ENCODE measurements at regions of chr7 and their contacts with region 1.

Region 1: DNA sequence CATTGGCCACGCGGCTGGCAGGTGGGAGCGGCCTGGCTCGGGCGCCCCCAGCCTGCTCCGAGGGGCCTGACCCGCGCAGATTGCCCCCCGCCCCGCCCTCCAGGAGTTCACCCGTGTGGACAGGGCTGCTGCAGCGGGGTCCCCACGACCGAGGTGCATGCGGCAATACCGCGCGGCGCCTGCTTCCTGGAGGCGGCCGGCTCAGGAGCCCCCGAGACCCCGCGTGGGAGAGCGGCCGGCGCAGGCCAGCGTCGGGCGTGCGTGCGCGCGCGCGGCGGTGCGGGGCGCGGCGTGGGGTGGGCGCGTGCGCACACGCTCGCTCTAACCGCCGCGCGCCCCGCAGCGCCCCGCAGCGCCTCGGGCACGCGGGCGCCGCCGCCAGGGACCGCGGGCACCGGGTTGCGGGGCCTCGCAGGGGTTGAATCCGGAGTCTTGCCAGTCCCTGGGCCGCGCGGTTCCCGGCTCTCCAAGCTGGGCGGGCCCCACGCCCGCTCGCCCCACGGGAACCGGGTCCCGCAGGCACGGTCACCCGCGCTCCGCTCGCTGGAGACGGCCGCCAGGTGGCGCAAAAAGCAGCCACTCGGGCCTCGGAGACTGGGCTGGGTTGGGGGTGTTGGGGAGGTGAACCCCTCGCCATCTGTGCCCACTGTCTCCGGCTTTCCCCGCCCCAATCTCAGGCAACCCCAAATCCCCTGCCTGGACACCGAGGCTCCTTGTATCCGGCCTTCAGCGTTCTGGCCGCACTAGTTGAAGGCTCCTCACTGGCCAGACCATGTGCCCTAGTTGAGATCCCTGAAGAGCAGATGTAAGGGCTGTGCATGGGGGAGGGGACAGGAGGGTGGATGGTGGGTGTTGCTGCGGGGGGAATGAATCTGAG is 1.3 kb upstream of the ACHE start:
- DNase-seq: peak in 1 of 2 donors; percentile 60
- ATAC-seq: peak in 4 of 8 donors; percentile 36 to 53 (median 42)
- H3K4me3 ChIP-seq: peak overlapping the region; percentile 13 to 61 (median 40)
- H3K27ac ChIP-seq: no peak overlapping the region
- H3K4me1 ChIP-seq: peaks cover 0 to 27% (median 17%) of the 10 kb centered on the region in 9 donors
- H3K27me3 ChIP-seq: peaks cover 13 to 78% (median 61%) of the 10 kb centered on the region in 7 donors
- CTCF ChIP-seq: peak; percentile 54 to 83 (median 76)

Region 2: GRCh38 chr7:99543081-99543850 is 1353.7 kb before region 1 on chr7:
- intact Hi-C with region 1: loop called in 1 of 10 experiments (anchors 10 kb)
- DNase-seq: no peak
- ATAC-seq: peak in 1 of 8 donors; percentile 67
- H3K4me3 ChIP-seq: no peak overlapping the region
- H3K27ac ChIP-seq: no peak overlapping the region
- H3K4me1 ChIP-seq: no peaks in the 10 kb centered on the region
- H3K27me3 ChIP-seq: no peaks in the 10 kb centered on the region
- CTCF ChIP-seq: no peak

Region 3: DNA sequence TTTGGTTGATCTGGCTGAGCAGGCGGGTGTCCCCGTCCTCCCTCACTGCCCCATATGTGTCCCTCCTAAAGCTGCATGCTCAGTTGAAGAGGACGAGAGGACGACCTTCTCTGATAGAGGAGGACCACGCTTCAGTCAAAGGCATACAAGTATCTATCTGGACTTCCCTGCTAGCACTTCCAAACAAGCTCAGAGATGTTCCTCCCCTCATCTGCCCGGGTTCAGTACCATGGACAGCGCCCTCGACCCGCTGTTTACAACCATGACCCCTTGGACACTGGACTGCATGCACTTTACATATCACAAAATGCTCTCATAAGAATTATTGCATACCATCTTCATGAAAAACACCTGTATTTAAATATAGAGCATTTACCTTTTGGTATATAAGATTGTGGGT is 161.4 kb after region 1 on chr7:
- intact Hi-C with region 1: loop called (anchors 1 to 5 kb)
- DNase-seq: peak; percentile 69 to 74
- ATAC-seq: peak in 6 of 8 donors; percentile 58 to 93 (median 80)
- H3K4me3 ChIP-seq: no peak overlapping the region
- H3K27ac ChIP-seq: no peak overlapping the region
- H3K4me1 ChIP-seq: no peaks in the 10 kb centered on the region
- H3K27me3 ChIP-seq: peaks cover 0 to 85% (median 66%) of the 10 kb centered on the region in 7 donors
- CTCF ChIP-seq: no peak

Region 4: GRCh38 chr7:101258243-101258731 is 361.3 kb after region 1 on chr7:
- intact Hi-C with region 1: no loop called
- DNase-seq: no peak
- ATAC-seq: no peak
- H3K4me3 ChIP-seq: no peak overlapping the region
- H3K27ac ChIP-seq: no peak overlapping the region
- H3K4me1 ChIP-seq: no peaks in the 10 kb centered on the region
- H3K27me3 ChIP-seq: no peaks in the 10 kb centered on the region
- CTCF ChIP-seq: no peak